ENCODE measurements at regions of chr22 and their contacts with region 1.

Region 1: DNA sequence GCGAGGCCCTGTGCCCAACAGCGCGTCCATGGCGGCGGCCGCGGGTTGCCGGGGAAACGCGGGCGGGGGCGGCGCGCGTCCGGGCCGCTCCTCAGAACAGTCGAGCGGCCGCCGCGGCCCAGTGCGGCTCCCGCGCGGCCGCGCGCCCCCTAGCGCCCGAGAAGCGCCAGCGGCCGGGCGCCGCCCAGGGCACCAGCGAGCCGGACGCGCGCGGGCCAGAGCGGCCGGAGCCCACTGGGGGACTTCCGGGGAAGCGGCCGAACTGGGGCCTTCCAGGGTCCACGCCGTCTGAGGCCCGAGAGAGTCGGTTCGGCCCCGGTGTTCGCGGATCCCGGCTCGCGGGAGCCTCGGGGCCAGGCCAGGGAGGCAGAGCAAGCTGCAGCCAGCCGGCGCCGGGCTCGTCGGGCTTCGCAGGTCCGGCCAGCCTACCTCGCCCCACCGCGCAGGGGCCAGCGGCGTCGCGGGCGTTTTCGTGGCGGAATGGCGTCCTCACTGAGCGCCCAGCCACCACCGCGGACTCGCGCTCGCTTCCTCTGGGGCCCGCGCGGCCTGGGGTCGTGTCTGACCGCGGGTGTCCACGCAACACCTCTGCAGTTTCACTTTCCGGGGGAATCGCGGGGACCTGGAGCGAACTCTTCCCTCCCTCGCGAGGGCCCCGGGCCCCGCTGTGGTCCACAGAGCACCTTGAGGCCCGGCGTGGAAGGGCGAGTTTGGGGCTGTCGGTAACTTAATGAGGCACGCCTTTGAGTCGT is at the start of gene DENND6B:
- DNase-seq: no peak
- H3K4me3 ChIP-seq: peak within 1 kb of the TSS; percentile 67 to 93 (median 87)
- H3K27ac ChIP-seq: peak within 1 kb of the TSS; percentile 81 to 97 (median 93)
- H3K4me1 ChIP-seq: peaks cover 14 to 23% (median 20%) of the 10 kb centered on the region in 4 donors
- H3K27me3 ChIP-seq: no peaks in the 10 kb centered on the region
- CTCF ChIP-seq: peak; percentile 55 to 94 (median 73)
- EP300 ChIP-seq: no peak
- POLR2A ChIP-seq: peak; percentile 22
- total RNA-seq, gene DENND6B: 1.7 to 3.8 (median 2.5) TPM

Region 2: DNA sequence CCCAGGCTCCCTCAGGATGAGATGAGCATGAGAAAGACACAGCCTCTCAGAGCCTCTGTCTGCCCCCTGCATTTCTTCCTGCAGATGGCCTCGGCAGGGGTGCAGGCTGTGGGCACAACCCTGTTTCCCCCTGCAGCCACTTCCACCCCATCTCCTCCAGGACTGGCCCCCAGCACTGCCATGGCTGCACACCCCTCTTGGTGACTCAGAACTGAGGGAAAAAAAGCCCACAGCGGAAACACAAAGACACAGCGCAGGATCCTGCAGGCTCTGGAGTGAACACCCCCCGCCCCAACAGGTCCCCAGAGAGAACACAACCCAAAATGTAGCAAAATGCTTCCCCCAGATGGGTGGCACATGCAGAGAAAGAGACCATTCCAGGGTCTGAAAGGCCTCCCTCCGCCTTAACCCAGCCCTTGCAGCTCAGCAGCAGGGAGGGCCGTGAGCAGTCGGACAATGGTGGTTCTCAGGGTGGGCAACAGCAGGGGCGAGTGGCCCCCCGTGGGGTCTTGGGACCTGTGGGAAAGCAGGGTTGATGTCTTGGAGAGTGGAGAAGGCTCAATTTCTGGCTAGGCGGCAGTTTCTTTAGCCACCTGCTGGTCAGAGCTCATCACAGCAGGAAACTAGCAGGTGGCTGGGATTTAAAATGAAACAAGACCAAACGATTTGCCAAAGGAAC is 90.3 kb before region 1 on chr22:
- intact Hi-C with region 1: no loop called
- DNase-seq: no peak
- H3K4me3 ChIP-seq: no peak overlapping the region
- H3K27ac ChIP-seq: no peak overlapping the region
- H3K4me1 ChIP-seq: peaks cover 15 to 23% (median 16%) of the 10 kb centered on the region in 4 donors
- H3K27me3 ChIP-seq: no peaks in the 10 kb centered on the region
- CTCF ChIP-seq: peak in 1 of 3 experiments; percentile 9
- EP300 ChIP-seq: no peak
- POLR2A ChIP-seq: no peak

Region 3: DNA sequence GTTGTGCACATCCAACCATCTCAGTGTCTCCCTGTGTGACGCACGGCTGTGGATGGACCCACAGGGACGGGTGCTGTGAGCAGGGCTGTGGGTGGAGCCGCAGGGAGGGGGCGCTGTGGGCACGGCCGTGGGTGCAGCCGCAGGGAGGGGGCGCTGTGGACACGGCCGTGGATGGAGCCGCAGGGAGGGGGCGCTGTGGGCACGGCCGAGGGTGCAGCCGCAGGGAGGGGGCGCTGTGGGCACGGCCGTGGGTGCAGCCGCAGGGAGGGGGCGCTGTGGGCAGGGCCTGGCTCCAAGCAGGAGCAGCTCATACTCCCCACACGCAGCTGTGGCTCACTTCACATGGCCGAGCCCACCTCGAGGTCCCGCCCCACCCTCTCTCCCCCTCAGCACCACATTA is 51.0 kb before region 1 on chr22:
- intact Hi-C with region 1: loop called (anchors 1 kb)
- DNase-seq: no peak
- H3K4me3 ChIP-seq: no peak overlapping the region
- H3K27ac ChIP-seq: peak overlapping the region in 3 of 4 donors; percentile 47 to 64 (median 53)
- H3K4me1 ChIP-seq: peaks cover 21 to 43% (median 31%) of the 10 kb centered on the region in 4 donors
- H3K27me3 ChIP-seq: peaks cover 0 to 10% (median 0%) of the 10 kb centered on the region in 4 donors
- CTCF ChIP-seq: peak; percentile 12 to 62 (median 53)
- EP300 ChIP-seq: no peak
- POLR2A ChIP-seq: no peak

Region 4: DNA sequence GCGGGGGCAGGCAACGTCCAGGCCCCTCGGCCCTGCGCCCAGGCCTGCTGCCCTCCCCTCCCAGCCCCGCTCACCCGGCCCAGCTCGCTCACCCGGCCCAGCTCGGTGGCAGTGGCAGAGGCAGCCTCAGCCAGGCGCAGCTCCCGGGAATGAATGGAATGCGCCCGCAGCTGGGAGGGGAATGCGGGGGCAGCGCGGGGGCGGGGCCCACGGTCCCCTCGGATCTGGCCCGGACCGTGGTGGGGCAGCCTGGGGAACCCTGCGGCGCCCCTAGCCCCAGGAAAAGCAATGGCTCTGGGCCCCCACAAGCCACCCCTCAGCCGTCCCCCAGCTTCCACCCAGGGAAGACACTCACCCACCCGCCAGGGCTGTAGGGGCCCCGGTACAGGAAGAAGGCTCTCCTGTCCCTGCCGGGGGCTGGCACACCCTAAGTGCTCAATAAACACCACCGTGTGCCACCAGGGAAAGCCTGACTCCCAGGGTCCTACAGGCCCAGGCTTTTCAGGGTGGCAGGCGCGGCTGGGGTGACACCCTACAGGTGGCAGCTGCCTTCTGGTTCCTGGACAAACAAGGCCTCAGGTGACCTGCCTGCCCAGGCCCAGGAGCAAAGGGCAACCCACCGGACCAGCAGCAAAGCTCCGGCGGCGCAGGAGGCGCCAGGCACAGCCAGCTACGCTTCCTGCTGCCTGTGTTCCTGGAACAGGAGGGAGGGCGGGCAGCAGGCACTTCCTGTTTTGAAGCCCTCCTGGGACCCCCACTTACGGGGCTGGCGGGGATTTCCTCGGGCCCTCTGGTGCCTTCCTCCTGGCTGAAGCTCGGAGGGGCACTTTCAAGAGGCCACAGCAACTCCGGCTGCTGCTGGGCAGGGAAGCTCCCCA is 33.5 kb before region 1 on chr22:
- intact Hi-C with region 1: loop called (anchors 5 kb)
- DNase-seq: no peak
- H3K4me3 ChIP-seq: peak overlapping the region; percentile 42 to 55 (median 45)
- H3K27ac ChIP-seq: peak overlapping the region; percentile 81 to 91 (median 86)
- H3K4me1 ChIP-seq: peaks cover 51 to 90% (median 78%) of the 10 kb centered on the region in 4 donors
- H3K27me3 ChIP-seq: peaks cover 0 to 6% (median 0%) of the 10 kb centered on the region in 4 donors
- CTCF ChIP-seq: no peak
- EP300 ChIP-seq: no peak
- POLR2A ChIP-seq: no peak

Region 5: GRCh38 chr22:50308536-50308935 is 18.6 kb before region 1 on chr22:
- intact Hi-C with region 1: loop called (anchors 2 kb)
- DNase-seq: peak; percentile 95
- H3K4me3 ChIP-seq: peak overlapping the region in 3 of 4 donors; percentile 1 to 23 (median 19)
- H3K27ac ChIP-seq: peak overlapping the region; percentile 81 to 93 (median 87)
- H3K4me1 ChIP-seq: peaks cover 41 to 59% (median 56%) of the 10 kb centered on the region in 4 donors
- H3K27me3 ChIP-seq: no peaks in the 10 kb centered on the region
- CTCF ChIP-seq: no peak
- EP300 ChIP-seq: no peak
- POLR2A ChIP-seq: no peak